CD4-positive, alpha-beta T cell (primary cell): ENCODE measurements at regions of chr3 and their contacts with region 1.

Region 1: DNA sequence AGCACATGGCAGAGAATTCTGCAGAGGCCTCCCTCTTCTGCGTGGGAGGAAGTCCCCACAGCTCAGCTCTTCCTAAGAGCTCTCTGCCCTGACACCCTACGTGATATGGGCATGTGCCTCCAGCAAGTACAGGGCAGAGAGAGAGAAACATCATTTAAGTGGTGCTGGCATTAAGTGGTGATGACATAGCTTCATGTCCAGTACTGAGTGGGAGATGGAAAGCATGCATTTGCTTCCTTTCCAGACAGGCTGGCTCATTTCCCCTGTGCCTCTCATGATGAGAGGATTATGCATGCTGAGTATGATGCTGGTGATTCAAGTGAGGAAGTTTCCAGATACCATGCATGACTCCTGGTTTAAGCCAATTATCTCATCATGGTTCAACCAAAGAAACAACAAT is 26.9 kb downstream of the BFSP2 start:
- DNase-seq: no peak
- ATAC-seq: no peak
- H3K4me3 ChIP-seq: no peak overlapping the region
- H3K4me3 Mint-ChIP-seq: no peak overlapping the region
- H3K27ac ChIP-seq: no peak overlapping the region
- H3K27ac Mint-ChIP-seq: no peak overlapping the region
- H3K4me1 ChIP-seq: peaks cover 6% of the 10 kb centered on the region
- H3K4me1 Mint-ChIP-seq: no peaks in the 10 kb centered on the region
- H3K27me3 ChIP-seq: no peaks in the 10 kb centered on the region
- H3K27me3 Mint-ChIP-seq: peaks cover 9% of the 10 kb centered on the region
- CTCF ChIP-seq: no peak

Region 2: GRCh38 chr3:133620066-133620784 is 193.5 kb after region 1 on chr3:
- CTCF ChIA-PET with region 1: no interaction called
- POLR2A ChIA-PET with region 1: no interaction called
- intact Hi-C with region 1: no loop called
- DNase-seq: no peak
- ATAC-seq: no peak
- H3K4me3 ChIP-seq: no peak overlapping the region
- H3K4me3 Mint-ChIP-seq: no peak overlapping the region
- H3K27ac ChIP-seq: no peak overlapping the region
- H3K27ac Mint-ChIP-seq: no peak overlapping the region
- H3K4me1 ChIP-seq: no peaks in the 10 kb centered on the region
- H3K4me1 Mint-ChIP-seq: no peaks in the 10 kb centered on the region
- H3K27me3 ChIP-seq: no peaks in the 10 kb centered on the region
- H3K27me3 Mint-ChIP-seq: no peaks in the 10 kb centered on the region
- CTCF ChIP-seq: no peak

Region 3: DNA sequence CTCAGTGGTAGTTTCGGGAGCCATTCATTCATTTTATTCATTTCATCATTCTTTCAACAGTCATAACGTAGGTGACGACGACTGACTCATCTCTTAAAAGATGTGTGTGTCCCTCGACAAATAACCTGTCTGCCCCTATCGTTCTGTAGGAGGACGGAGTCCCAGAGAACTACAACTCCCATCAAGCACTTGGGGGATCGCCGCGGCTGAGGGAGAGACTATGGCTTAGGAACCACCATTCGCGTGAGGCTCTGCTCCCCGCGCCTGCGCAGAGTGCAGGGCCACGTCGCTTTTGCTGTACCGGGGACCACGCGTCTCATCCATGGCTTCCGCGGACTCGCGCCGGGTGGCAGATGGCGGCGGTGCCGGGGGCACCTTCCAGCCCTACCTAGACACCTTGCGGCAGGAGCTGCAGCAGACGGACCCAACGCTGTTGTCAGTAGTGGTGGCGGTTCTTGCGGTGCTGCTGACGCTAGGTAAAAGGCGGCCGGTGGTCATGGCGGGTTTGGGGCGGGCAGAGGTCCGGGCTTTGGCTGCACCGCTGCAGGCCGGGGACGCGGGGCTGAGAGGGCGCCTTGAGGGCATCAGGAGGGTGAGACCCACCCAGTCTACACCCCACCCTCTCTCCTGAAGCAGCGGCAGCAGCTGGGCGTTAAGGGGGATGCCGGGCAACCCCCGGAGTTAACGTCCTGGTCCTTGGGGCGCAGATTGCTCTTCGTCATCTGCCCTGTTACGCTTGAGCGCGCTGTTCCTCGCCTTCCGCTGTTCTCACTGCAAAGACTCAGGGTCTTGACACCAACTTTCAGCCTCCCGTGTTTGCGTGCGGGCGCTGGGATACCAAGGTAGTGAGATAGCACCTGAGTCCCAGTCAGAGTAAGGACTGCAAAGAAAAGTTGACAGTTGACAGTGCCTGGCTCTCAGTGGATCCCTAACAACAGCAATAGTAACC is 379.1 kb after region 1 on chr3 and contains the start of gene SRPRB:
- CTCF ChIA-PET with region 1: no interaction called
- POLR2A ChIA-PET with region 1: no interaction called
- intact Hi-C with region 1: loop called in 1 of 2 experiments (anchors 10 kb)
- DNase-seq: peak; percentile 90 to 99 (median 94)
- ATAC-seq: peak; percentile 95
- H3K4me3 ChIP-seq: peak within 1 kb of the TSS; percentile 92
- H3K4me3 Mint-ChIP-seq: peak within 1 kb of the TSS; percentile 97
- H3K27ac ChIP-seq: peak within 1 kb of the TSS; percentile 70 to 75
- H3K27ac Mint-ChIP-seq: peak within 1 kb of the TSS; percentile 94
- H3K4me1 ChIP-seq: peaks cover 16% of the 10 kb centered on the region
- H3K4me1 Mint-ChIP-seq: peaks cover 40% of the 10 kb centered on the region
- H3K27me3 ChIP-seq: no peaks in the 10 kb centered on the region
- H3K27me3 Mint-ChIP-seq: no peaks in the 10 kb centered on the region
- CTCF ChIP-seq: no peak
- total RNA-seq, gene SRPRB: 19.1 to 19.9 TPM